H1 (cell line): ENCODE measurements at regions of chr17 and their contacts with region 1.

Region 1: DNA sequence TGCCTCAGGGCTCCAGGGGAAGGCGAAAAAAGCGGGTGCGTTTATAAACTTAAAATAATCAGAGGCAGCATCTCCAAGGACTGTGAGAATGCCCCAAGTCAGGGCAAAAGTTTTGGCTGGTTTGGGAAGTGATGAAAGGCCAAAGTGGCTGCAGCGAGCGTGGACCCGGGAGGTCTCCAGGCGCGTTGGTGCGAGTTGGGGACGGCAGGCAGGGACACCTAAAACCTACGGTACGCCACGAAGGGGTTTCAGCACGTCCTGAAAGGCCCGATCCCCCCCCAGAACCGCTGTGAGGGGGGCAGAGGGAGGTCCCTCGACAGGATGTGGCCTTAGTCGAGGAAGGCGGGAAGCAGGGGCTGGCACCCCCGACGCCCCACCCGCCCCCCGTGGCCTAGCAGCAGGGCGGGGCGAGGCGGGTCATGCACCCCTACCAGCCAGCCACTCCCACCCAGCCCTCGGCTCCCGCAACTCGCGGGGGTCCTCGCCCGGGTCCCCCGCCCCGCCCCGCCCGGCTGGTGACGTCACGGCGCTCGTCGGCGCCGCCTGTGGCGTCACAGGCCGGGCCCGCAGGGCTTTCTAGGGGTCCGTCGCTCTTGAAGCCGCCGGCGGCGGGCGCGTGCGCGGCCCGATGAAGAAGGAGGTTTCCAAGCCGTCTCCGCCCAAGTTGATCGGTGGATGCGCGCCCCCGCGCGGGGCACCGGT is at the start of gene MYCBPAP:
- DNase-seq: peak; percentile 43 to 87
- H3K4me3 ChIP-seq: peak within 1 kb of the TSS; percentile 69 to 86 (median 75)
- H3K27ac ChIP-seq: no peak within 1 kb of the TSS
- H3K4me1 ChIP-seq: peaks cover 5 to 15% (median 10%) of the 10 kb centered on the region in 4 experiments
- H3K27me3 ChIP-seq: no peaks in the 10 kb centered on the region; a peak in 1 of 7 replicates
- CTCF ChIP-seq: no peak; a peak in 1 of 4 replicates
- EP300 ChIP-seq: no peak
- POLR2A ChIP-seq: peak in 1 of 2 experiments; percentile 53; a peak in 2 of 3 replicates
- RAD21 ChIP-seq: 0 out of 4 replicates have a peak, but pooled peaks of 1 of the 2 experiments have one; percentile 9
- total RNA-seq, gene MYCBPAP: 1.7 and 3.3 TPM in 2 replicates

Region 2: GRCh38 chr17:50471009-50471905 is 36.8 kb before region 1 on chr17:
- CTCF ChIA-PET with region 1: no interaction called
- POLR2A ChIA-PET with region 1: no interaction called
- DNase-seq: no peak
- H3K4me3 ChIP-seq: no peak overlapping the region
- H3K27ac ChIP-seq: no peak overlapping the region
- H3K4me1 ChIP-seq: peaks cover 0 to 17% (median 7%) of the 10 kb centered on the region in 4 experiments; a peak in 6 of 7 replicates
- H3K27me3 ChIP-seq: peaks cover 8 to 39% (median 26%) of the 10 kb centered on the region in 4 experiments; a peak in 6 of 7 replicates
- CTCF ChIP-seq: no peak
- EP300 ChIP-seq: no peak
- POLR2A ChIP-seq: no peak
- RAD21 ChIP-seq: no peak

Region 3: DNA sequence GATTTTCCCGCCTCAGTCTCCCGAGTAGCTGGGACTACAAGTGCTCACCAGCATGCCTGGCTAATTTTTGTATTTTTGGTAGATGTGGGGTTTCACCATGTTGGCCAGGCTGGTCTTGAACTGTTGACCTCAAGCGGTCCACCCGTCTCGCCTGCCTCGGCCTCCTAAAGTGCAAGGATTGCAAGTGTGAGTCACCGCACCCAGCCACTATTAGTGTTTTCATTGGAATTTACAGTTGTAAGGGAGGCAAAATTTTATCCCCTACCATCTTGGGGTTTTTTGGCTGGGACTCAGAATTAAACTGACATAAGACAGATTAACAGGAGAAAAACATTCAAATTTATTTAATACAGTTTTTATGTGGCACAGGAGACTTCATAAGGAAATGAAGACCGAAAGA is 12.1 kb before region 1 on chr17:
- CTCF ChIA-PET with region 1: interaction called, 11 read pairs
- POLR2A ChIA-PET with region 1: no interaction called
- DNase-seq: no peak
- H3K4me3 ChIP-seq: no peak overlapping the region
- H3K27ac ChIP-seq: no peak overlapping the region
- H3K4me1 ChIP-seq: no peaks in the 10 kb centered on the region
- H3K27me3 ChIP-seq: no peaks in the 10 kb centered on the region
- CTCF ChIP-seq: no peak
- EP300 ChIP-seq: no peak
- POLR2A ChIP-seq: no peak
- RAD21 ChIP-seq: no peak